Breast epithelium (tissue), 4 donors: ENCODE measurements at regions of chr9 and their contacts with region 1.

Region 1: GRCh38 chr9:68779558-68780384 is 74.7 kb downstream of the PIP5K1B start:
- DNase-seq: peak; percentile 88 to 91
- H3K4me3 ChIP-seq: peak overlapping the region; percentile 69 to 91 (median 73)
- H3K27ac ChIP-seq: peak overlapping the region; percentile 94 to 96
- H3K4me1 ChIP-seq: peaks cover 0 to under 1% of the 10 kb centered on the region in 2 donors
- H3K27me3 ChIP-seq: no peaks in the 10 kb centered on the region
- CTCF ChIP-seq: peak in 1 of 3 donors; percentile 7
- POLR2A ChIP-seq: peak; percentile 75

Region 2: GRCh38 chr9:68836788-68837187 is 57.0 kb after region 1 on chr9:
- intact Hi-C with region 1: loop called (anchors 2 kb)
- DNase-seq: no peak
- H3K4me3 ChIP-seq: no peak overlapping the region
- H3K27ac ChIP-seq: no peak overlapping the region
- H3K4me1 ChIP-seq: no peaks in the 10 kb centered on the region
- H3K27me3 ChIP-seq: no peaks in the 10 kb centered on the region
- CTCF ChIP-seq: no peak
- POLR2A ChIP-seq: no peak

Region 3: DNA sequence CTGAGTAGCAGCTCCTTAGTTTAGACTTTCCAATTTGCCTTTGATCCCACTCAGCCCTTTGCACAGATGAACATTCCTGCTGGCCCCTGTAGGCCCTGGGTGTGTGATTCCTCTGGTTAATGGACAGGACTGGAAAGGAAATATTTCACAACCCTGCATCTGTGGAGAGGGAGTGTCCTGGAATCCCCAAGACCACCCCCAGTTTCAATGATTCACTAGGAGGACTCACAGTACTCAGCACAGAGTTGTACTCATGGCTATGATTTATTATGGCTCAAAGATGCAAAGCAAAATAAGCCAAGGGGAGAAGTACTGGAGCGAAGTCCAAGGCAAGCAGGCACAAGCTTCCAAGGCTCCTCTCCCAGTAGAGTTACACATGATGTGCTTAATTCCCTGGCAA is 351.9 kb after region 1 on chr9:
- intact Hi-C with region 1: no loop called
- DNase-seq: peak in 1 of 2 donors; percentile 15
- H3K4me3 ChIP-seq: no peak overlapping the region
- H3K27ac ChIP-seq: peak overlapping the region; percentile 6 to 35
- H3K4me1 ChIP-seq: peaks cover 5 to 6% of the 10 kb centered on the region in 2 donors
- H3K27me3 ChIP-seq: no peaks in the 10 kb centered on the region
- CTCF ChIP-seq: no peak
- POLR2A ChIP-seq: no peak

Region 4: DNA sequence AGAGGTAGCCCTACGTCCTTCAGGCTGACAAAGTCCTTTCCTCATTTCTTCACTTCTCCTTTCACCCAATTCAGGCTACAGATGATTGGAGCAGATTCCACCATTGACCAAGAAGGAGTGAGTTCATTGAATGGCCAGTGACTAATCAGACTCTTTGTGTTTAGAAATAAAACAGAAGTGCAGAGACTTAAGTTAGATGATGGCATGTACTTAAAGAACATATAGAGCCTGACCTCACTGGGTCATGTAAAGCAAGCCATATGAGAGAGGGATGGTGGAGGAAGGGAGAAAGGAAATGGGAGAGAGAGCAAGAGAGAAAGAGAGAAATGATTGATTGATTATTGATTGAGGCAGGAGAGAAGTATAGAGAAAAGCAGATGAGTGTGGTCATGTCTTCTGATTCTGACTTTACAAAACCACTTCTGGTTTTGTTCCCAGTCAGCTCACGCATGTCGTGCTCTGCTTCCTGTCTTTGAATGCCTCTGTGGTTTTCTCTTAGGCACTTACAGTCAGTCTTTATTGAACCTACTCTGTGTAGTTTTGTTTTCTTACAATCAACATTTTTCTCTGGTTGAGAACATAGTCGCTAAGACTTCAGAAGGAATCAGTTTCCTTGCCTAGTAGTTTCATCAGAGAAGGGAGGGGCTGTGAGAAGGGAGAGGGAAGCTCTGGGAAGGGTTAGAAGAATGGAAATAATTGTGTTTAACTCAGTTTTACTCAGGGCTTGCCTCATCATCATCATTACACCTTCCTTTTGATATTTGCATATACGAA is 1783.8 kb after region 1 on chr9:
- intact Hi-C with region 1: loop called (anchors 10 kb)
- DNase-seq: no peak
- H3K4me3 ChIP-seq: no peak overlapping the region
- H3K27ac ChIP-seq: peak overlapping the region; percentile 71 to 87
- H3K4me1 ChIP-seq: no peaks in the 10 kb centered on the region
- H3K27me3 ChIP-seq: no peaks in the 10 kb centered on the region
- CTCF ChIP-seq: no peak
- POLR2A ChIP-seq: no peak